ENCODE measurements at regions of chr21 and their contacts with region 1.

Region 1: GRCh38 chr21:41973861-41974751 is 20.3 kb upstream of the C2CD2 start:
- DNase-seq: peak in 6 of 9 donors; percentile 11 to 36 (median 26)
- ATAC-seq: peak; percentile 56
- H3K4me3 ChIP-seq: peak overlapping the region; percentile 28
- H3K4me3 Mint-ChIP-seq: peak overlapping the region; percentile 36 to 75 (median 66)
- H3K27ac ChIP-seq: no peak overlapping the region
- H3K27ac Mint-ChIP-seq: peak overlapping the region; percentile 14 to 83 (median 71)
- H3K4me1 ChIP-seq: peaks cover 0 to 20% of the 10 kb centered on the region in 2 donors
- H3K4me1 Mint-ChIP-seq: peaks cover 14 to 28% (median 18%) of the 10 kb centered on the region in 7 donors
- H3K27me3 ChIP-seq: peaks cover 0 to under 1% of the 10 kb centered on the region in 2 donors
- H3K27me3 Mint-ChIP-seq: peaks cover 0 to 2% (median 0%) of the 10 kb centered on the region in 5 donors

Region 2: DNA sequence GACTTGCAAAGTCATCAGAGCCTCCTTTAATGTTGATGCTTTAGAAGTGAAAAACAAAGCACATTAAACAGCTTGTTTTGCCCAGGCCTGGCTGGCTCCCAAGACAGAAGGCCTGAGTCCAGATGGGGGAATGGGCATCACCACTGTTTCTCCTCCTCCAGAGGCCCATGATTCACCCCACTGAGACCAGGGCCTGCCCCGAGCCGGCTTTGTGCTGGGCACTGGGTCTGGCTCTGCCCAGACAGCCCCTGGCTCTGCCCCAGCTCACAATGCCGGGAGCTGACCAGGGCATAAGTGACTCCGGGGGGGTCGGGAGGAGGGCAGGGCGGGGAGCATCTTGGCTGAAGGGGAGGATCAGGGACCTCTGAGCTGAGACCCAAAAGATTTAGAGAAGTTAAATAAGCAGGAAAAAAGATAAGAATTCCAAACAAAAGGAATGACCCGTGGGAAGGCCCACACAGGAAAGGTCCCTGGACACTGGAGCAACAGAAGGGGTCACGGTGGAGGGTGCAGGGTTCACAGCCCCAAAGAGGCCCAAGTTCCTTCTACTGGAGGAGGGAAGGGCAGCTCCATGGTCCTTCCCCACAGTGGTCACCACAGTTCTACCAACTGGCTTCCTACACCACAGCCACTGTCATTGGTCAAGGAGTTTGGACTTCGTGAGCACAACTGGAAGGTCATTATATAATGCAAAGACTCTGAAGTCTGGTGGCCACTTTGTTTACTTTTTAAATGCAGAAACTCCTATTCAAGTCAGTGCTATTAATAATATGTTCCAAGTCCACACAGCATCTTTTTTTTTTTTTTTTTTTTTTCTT is 25.8 kb before region 1 on chr21:
- CTCF ChIA-PET with region 1: no interaction called
- POLR2A ChIA-PET with region 1: no interaction called
- intact Hi-C with region 1: no loop called
- DNase-seq: no peak
- ATAC-seq: no peak
- H3K4me3 ChIP-seq: no peak overlapping the region
- H3K4me3 Mint-ChIP-seq: no peak overlapping the region
- H3K27ac ChIP-seq: no peak overlapping the region
- H3K27ac Mint-ChIP-seq: no peak overlapping the region
- H3K4me1 ChIP-seq: no peaks in the 10 kb centered on the region
- H3K4me1 Mint-ChIP-seq: peaks cover 0 to 10% (median 5%) of the 10 kb centered on the region in 7 donors
- H3K27me3 ChIP-seq: no peaks in the 10 kb centered on the region
- H3K27me3 Mint-ChIP-seq: peaks cover 0 to 14% (median 0%) of the 10 kb centered on the region in 5 donors

Region 3: GRCh38 chr21:42025376-42026081 is 51.4 kb after region 1 on chr21:
- CTCF ChIA-PET with region 1: no interaction called
- POLR2A ChIA-PET with region 1: no interaction called
- intact Hi-C with region 1: no loop called
- DNase-seq: no peak
- ATAC-seq: no peak
- H3K4me3 ChIP-seq: no peak overlapping the region
- H3K4me3 Mint-ChIP-seq: no peak overlapping the region
- H3K27ac ChIP-seq: no peak overlapping the region
- H3K27ac Mint-ChIP-seq: peak overlapping the region in 3 of 9 donors; percentile 50 to 75 (median 68)
- H3K4me1 ChIP-seq: no peaks in the 10 kb centered on the region
- H3K4me1 Mint-ChIP-seq: peaks cover 0 to 9% (median 0%) of the 10 kb centered on the region in 7 donors
- H3K27me3 ChIP-seq: no peaks in the 10 kb centered on the region
- H3K27me3 Mint-ChIP-seq: peaks cover 0 to 6% (median 0%) of the 10 kb centered on the region in 5 donors

Region 4: GRCh38 chr21:42107881-42108553 is 133.9 kb after region 1 on chr21:
- CTCF ChIA-PET with region 1: no interaction called
- POLR2A ChIA-PET with region 1: no interaction called
- intact Hi-C with region 1: loop called in 1 of 2 experiments (anchors 1 kb)
- DNase-seq: peak; percentile 46 to 82 (median 69)
- ATAC-seq: peak; percentile 97
- H3K4me3 ChIP-seq: peak overlapping the region; percentile 11
- H3K4me3 Mint-ChIP-seq: peak overlapping the region; percentile 34 to 84 (median 76)
- H3K27ac ChIP-seq: peak overlapping the region; percentile 38
- H3K27ac Mint-ChIP-seq: peak overlapping the region in 8 of 9 donors; percentile 11 to 82 (median 73)
- H3K4me1 ChIP-seq: peaks cover 0 to 15% of the 10 kb centered on the region in 2 donors
- H3K4me1 Mint-ChIP-seq: peaks cover 0 to 28% (median 10%) of the 10 kb centered on the region in 7 donors
- H3K27me3 ChIP-seq: no peaks in the 10 kb centered on the region
- H3K27me3 Mint-ChIP-seq: peaks cover 0 to 4% (median 0%) of the 10 kb centered on the region in 5 donors